CD8-positive, alpha-beta T cell (primary cell): ENCODE measurements at regions of chr15 and their contacts with region 1.

Region 1: GRCh38 chr15:72685925-72686794 is at the starts of genes BBS4 and HIGD2B:
- DNase-seq: peak; percentile 68 to 93 (median 86)
- ATAC-seq: peak; percentile 92
- H3K4me3 ChIP-seq: peak within 1 kb of the TSS; percentile 73 to 87
- H3K4me3 Mint-ChIP-seq: peak within 1 kb of the TSS; percentile 97
- H3K27ac ChIP-seq: peak within 1 kb of the TSS; percentile 86 to 90
- H3K27ac Mint-ChIP-seq: peak within 1 kb of the TSS; percentile 96
- H3K4me1 ChIP-seq: peaks cover 14% of the 10 kb centered on the region
- H3K4me1 Mint-ChIP-seq: peaks cover 18% of the 10 kb centered on the region
- H3K27me3 ChIP-seq: no peaks in the 10 kb centered on the region
- H3K27me3 Mint-ChIP-seq: no peaks in the 10 kb centered on the region
- CTCF ChIP-seq: no peak
- total RNA-seq, gene BBS4: 8.8 to 12.9 TPM
- total RNA-seq, gene HIGD2B: 0.27 TPM in 1 of 2 experiments, not detected in the other

Region 2: GRCh38 chr15:72117486-72118399 is 568.4 kb before region 1 on chr15 and contains the start of gene MYO9A:
- CTCF ChIA-PET with region 1: no interaction called
- POLR2A ChIA-PET with region 1: no interaction called
- intact Hi-C with region 1: loop called in 1 of 2 experiments (anchors 1 kb)
- DNase-seq: peak; percentile 97 to 100 (median 99)
- ATAC-seq: peak; percentile 80
- H3K4me3 ChIP-seq: peak within 1 kb of the TSS; percentile 78 to 93
- H3K4me3 Mint-ChIP-seq: peak within 1 kb of the TSS; percentile 99
- H3K27ac ChIP-seq: peak within 1 kb of the TSS; percentile 95 to 97
- H3K27ac Mint-ChIP-seq: peak within 1 kb of the TSS; percentile 99
- H3K4me1 ChIP-seq: peaks cover 18% of the 10 kb centered on the region
- H3K4me1 Mint-ChIP-seq: peaks cover 45% of the 10 kb centered on the region
- H3K27me3 ChIP-seq: no peaks in the 10 kb centered on the region
- H3K27me3 Mint-ChIP-seq: no peaks in the 10 kb centered on the region
- CTCF ChIP-seq: no peak
- total RNA-seq, gene MYO9A: 15.1 to 20.0 TPM

Region 3: GRCh38 chr15:72222259-72222832 is 463.8 kb before region 1 on chr15:
- CTCF ChIA-PET with region 1: no interaction called
- POLR2A ChIA-PET with region 1: no interaction called
- intact Hi-C with region 1: loop called in 1 of 2 experiments (anchors 5 kb)
- DNase-seq: no peak
- ATAC-seq: no peak
- H3K4me3 ChIP-seq: no peak overlapping the region
- H3K4me3 Mint-ChIP-seq: no peak overlapping the region
- H3K27ac ChIP-seq: no peak overlapping the region
- H3K27ac Mint-ChIP-seq: peak overlapping the region; percentile 66
- H3K4me1 ChIP-seq: peaks cover 30% of the 10 kb centered on the region
- H3K4me1 Mint-ChIP-seq: peaks cover 65% of the 10 kb centered on the region
- H3K27me3 ChIP-seq: no peaks in the 10 kb centered on the region
- H3K27me3 Mint-ChIP-seq: no peaks in the 10 kb centered on the region
- CTCF ChIP-seq: no peak

Region 4: GRCh38 chr15:72591361-72591760 is 94.8 kb before region 1 on chr15:
- CTCF ChIA-PET with region 1: no interaction called
- POLR2A ChIA-PET with region 1: no interaction called
- intact Hi-C with region 1: loop called in 1 of 2 experiments (anchors 5 kb)
- DNase-seq: no peak
- ATAC-seq: no peak
- H3K4me3 ChIP-seq: no peak overlapping the region
- H3K4me3 Mint-ChIP-seq: no peak overlapping the region
- H3K27ac ChIP-seq: no peak overlapping the region
- H3K27ac Mint-ChIP-seq: no peak overlapping the region
- H3K4me1 ChIP-seq: no peaks in the 10 kb centered on the region
- H3K4me1 Mint-ChIP-seq: peaks cover 3% of the 10 kb centered on the region
- H3K27me3 ChIP-seq: no peaks in the 10 kb centered on the region
- H3K27me3 Mint-ChIP-seq: no peaks in the 10 kb centered on the region
- CTCF ChIP-seq: no peak